ENCODE measurements at regions of chr22 and their contacts with region 1.

Region 1: DNA sequence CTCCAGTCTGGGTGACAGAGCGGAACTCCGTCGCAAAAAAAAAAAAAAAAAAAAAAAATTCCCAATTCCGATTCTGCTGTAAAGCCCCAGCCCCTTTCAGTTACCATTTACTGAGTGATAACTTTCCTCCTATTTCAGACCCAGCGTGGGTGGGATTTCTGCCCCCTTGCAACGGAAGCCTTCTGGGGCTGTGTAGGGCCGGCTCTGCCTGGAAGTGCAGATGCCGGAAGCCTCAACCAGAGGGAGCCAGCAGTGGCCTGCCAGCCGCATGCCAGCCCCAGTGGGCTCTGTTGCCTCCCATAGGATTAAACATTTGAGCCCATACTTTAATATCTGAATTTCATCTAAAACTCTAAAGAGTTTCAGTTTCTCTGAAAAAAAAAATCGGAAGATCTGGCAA is 60.0 kb upstream of the NUP50 start:
- DNase-seq: no peak
- ATAC-seq: no peak
- H3K4me3 ChIP-seq: no peak overlapping the region
- H3K4me3 Mint-ChIP-seq: no peak overlapping the region
- H3K27ac ChIP-seq: no peak overlapping the region
- H3K27ac Mint-ChIP-seq: no peak overlapping the region
- H3K4me1 ChIP-seq: peaks cover 0 to 4% of the 10 kb centered on the region in 2 experiments
- H3K4me1 Mint-ChIP-seq: no peaks in the 10 kb centered on the region
- H3K27me3 ChIP-seq: peaks cover 0 to 45% of the 10 kb centered on the region in 2 experiments
- H3K27me3 Mint-ChIP-seq: peaks cover 13 to 32% of the 10 kb centered on the region in 2 donors

Region 2: GRCh38 chr22:44620129-44620840 is 483.5 kb before region 1 on chr22:
- CTCF ChIA-PET with region 1: no interaction called
- POLR2A ChIA-PET with region 1: no interaction called
- DNase-seq: peak; percentile 64 to 92 (median 86)
- ATAC-seq: peak; percentile 78 to 87 (median 82)
- H3K4me3 ChIP-seq: peak overlapping the region; percentile 43 to 62
- H3K4me3 Mint-ChIP-seq: no peak overlapping the region
- H3K27ac ChIP-seq: peak overlapping the region; percentile 59
- H3K27ac Mint-ChIP-seq: peak overlapping the region; percentile 66 to 75
- H3K4me1 ChIP-seq: peaks cover 8 to 29% of the 10 kb centered on the region in 2 experiments
- H3K4me1 Mint-ChIP-seq: peaks cover 5 to 8% (median 7%) of the 10 kb centered on the region in 3 donors
- H3K27me3 ChIP-seq: peaks cover 0 to 10% of the 10 kb centered on the region in 2 experiments
- H3K27me3 Mint-ChIP-seq: no peaks in the 10 kb centered on the region

Region 3: DNA sequence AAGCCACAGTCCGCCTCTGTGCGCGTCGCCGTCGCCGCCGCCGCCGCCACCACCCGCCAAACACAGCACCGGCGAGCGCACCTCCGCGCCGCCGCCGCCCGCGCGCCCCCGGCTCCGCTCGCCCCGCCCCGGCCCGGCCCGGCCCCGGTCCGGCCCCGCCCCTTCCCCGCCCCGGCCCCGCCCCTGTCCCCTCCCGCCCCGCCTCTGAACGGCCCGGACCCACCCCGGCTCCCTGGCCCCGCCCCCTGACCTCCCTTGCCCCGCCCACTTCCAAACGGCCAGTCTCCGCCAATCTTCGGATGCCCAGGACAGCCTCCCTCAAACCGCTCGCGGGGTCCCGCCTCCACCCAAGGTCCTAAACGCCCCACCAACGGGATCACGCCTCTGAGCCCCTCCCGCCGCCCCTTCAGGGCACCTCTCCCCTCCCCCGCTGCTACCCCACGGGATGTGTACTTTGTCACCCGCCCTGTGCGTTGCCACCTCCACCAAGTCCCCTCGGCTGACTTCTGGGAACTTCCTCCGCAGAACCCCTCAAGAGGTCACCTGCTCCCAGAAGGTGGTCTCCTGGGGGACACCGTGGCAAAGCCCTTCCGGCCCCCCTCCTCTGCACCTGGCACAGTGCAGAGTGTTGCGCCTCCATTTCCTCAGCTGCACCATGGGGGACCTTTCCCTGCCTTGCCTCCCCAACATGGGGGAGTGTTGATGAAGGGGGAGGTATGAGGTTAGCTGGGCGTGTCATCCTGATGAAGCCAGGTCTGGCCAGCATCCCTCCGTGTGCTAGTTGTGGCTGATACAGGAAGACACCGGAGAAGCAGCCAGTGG is 137.3 kb after region 1 on chr22 and contains the start of gene KIAA0930:
- CTCF ChIA-PET with region 1: no interaction called
- POLR2A ChIA-PET with region 1: no interaction called
- DNase-seq: peak; percentile 63 to 88 (median 77)
- ATAC-seq: peak; percentile 72 to 82 (median 78)
- H3K4me3 ChIP-seq: peak within 1 kb of the TSS; percentile 62 to 71
- H3K4me3 Mint-ChIP-seq: peak within 1 kb of the TSS; percentile 88 to 96 (median 92)
- H3K27ac ChIP-seq: peak within 1 kb of the TSS; percentile 72
- H3K27ac Mint-ChIP-seq: peak within 1 kb of the TSS; percentile 87 to 93
- H3K4me1 ChIP-seq: peaks cover 3 to 36% of the 10 kb centered on the region in 2 experiments
- H3K4me1 Mint-ChIP-seq: peaks cover 23 to 51% (median 41%) of the 10 kb centered on the region in 3 donors
- H3K27me3 ChIP-seq: no peaks in the 10 kb centered on the region
- H3K27me3 Mint-ChIP-seq: no peaks in the 10 kb centered on the region
- total RNA-seq, gene KIAA0930: 21.2 to 40.2 (median 30.8) TPM

Region 4: DNA sequence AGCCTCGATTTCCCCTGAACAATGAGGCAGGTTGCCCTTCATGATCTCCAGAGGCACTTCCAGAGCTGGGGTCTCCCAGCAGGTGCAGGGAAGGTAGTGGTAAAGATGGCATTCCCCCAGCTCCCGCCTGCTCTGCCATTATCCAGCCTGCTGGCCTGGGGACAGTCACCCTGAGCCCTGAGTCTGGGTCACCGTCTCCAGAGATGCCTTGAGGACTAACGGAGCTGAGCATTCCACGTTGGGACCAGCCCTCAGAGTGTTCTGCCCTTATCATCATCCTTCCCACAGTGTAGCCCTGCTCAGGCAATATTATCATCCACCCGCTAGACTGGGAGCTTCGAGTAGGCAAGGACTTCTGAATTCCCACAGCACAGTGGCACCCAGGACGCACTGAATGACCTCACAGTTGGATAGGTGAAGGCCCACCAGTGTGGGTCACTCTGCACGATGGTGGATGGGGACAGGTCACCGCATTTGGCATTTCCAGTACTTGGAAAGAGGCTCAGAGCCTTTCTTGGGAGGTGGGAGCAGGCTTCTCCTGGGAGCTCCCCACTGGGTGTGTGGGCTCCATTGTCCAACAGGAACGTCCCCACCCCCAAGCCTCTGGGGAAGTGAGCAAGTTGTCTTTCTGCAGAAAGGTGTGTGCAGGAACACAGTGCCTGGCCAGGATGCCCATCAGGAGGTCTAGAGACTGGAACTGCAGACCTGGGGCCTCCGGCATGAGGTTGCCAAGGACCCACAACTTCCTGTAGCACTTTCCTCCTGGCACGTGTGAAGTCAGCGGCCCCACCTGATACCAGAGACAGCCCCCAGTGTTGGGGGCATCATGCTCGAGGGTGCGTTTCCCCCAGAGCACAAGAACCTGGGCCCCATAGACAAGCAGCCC is 924.6 kb after region 1 on chr22:
- CTCF ChIA-PET with region 1: no interaction called
- POLR2A ChIA-PET with region 1: interaction called in 1 of 2 experiments, 11 read pairs
- DNase-seq: no peak
- ATAC-seq: no peak
- H3K4me3 ChIP-seq: no peak overlapping the region
- H3K4me3 Mint-ChIP-seq: peak overlapping the region in 1 of 3 donors; percentile 2
- H3K27ac ChIP-seq: no peak overlapping the region
- H3K27ac Mint-ChIP-seq: no peak overlapping the region
- H3K4me1 ChIP-seq: peaks cover 0 to 5% of the 10 kb centered on the region in 2 experiments
- H3K4me1 Mint-ChIP-seq: peaks cover 6 to 10% (median 6%) of the 10 kb centered on the region in 3 donors
- H3K27me3 ChIP-seq: peaks cover 0 to 62% of the 10 kb centered on the region in 2 experiments
- H3K27me3 Mint-ChIP-seq: peaks cover 32 to 46% of the 10 kb centered on the region in 2 donors